BJ (cell line): ENCODE measurements at regions of chr5 and their contacts with region 1.

Region 1: DNA sequence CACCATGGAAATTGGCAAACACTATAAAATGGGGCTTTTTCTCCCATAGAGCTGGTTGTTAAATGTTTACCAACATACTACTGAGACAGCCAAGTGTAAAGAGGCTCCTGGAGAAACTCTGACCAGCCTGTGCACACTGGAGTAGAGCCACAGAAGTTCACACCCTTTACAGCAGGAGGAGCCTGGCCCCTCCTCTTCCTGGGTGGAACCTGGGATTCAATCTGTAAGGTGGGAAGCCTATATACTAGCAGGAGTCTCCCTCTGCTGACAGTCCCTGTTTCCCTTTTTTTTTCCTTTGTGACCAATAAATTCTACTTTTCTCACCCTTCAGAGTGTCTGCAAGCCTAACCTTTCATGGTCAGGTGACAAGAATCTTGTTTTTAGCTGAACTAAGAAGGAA is 10.4 kb upstream of the SLC30A5 start:
- DNase-seq: no peak
- H3K4me3 ChIP-seq: no peak overlapping the region
- H3K27me3 ChIP-seq: no peaks in the 10 kb centered on the region
- CTCF ChIP-seq: no peak

Region 2: GRCh38 chr5:68898951-68899471 is 184.4 kb before region 1 on chr5:
- CTCF ChIA-PET with region 1: no interaction called
- POLR2A ChIA-PET with region 1: no interaction called
- DNase-seq: peak; percentile 55
- H3K4me3 ChIP-seq: no peak overlapping the region
- H3K27me3 ChIP-seq: no peaks in the 10 kb centered on the region
- CTCF ChIP-seq: no peak

Region 3: DNA sequence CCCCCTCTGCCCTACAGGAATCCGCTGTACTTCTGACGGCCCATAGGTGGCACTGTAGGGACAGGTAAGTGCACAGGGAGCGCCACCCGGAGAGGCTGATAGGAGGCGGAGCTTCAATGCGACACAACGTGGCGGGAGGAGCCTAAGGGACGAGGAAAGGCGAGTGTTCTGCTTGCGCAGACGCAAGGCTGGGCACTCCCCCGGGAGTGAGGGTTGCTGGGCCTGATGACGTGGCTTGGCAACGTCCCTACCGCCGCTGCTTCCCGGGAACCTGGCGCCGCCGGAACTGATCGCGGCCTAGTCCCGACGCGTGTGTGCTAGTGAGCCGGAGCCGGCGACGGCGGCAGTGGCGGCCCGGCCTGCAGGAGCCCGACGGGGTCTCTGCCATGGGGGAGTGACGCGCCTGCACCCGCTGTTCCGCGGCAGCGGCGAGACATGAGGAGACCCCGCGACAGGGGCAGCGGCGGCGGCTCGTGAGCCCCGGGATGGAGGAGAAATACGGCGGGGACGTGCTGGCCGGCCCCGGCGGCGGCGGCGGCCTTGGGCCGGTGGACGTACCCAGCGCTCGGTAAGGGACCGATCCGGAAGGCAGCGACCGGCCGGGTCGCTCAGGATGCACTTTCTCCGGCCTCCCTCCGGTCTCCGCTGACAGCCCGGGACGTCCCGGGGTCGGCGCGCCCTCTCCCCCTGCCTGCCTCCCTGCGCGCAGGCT is 10.5 kb after region 1 on chr5 and contains the start of gene SLC30A5:
- CTCF ChIA-PET with region 1: interaction called, 28 read pairs
- POLR2A ChIA-PET with region 1: no interaction called
- DNase-seq: peak; percentile 99
- H3K4me3 ChIP-seq: peak within 1 kb of the TSS; percentile 70
- H3K27me3 ChIP-seq: no peaks in the 10 kb centered on the region
- CTCF ChIP-seq: peak; percentile 93
- polyA plus RNA-seq, gene SLC30A5: 45.8 and 47.4 TPM in 2 replicates

Region 4: GRCh38 chr5:69105996-69106906 is 22.8 kb after region 1 on chr5:
- CTCF ChIA-PET with region 1: no interaction called
- POLR2A ChIA-PET with region 1: interaction called, 10 read pairs
- DNase-seq: no peak
- H3K4me3 ChIP-seq: no peak overlapping the region
- H3K27me3 ChIP-seq: no peaks in the 10 kb centered on the region
- CTCF ChIP-seq: no peak

Region 5: DNA sequence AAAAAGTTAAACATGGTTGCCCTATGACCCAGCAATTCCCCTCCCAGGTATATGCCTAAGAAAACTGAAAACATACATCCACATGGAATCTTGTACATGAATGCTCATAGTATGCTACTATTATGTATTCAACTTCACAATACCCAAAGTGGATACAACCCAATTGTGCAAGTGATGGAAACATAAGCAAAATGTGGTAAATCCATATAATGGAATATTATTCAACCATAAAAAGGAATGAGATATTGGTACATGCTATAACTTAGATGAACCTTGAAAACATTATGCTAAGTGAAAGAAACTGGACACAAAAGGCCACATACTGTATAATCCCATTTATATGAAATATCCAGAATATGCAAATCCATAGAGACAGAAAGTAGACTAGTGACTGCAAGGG is 267.3 kb after region 1 on chr5:
- CTCF ChIA-PET with region 1: no interaction called
- POLR2A ChIA-PET with region 1: interaction called, 17 read pairs
- DNase-seq: no peak
- H3K4me3 ChIP-seq: no peak overlapping the region
- H3K27me3 ChIP-seq: no peaks in the 10 kb centered on the region
- CTCF ChIP-seq: no peak